Activated T-helper 1 cell treated with anti-CD3 and anti-CD28 coated beads, Interleukin-12 subunit alpha, Interleukin-12 subunit beta, Interleukin-2, Interleukin-4 antibody, amounts not matched to agents 30 ng/mL and 10 ng/mL and 1 ng/mL, durations not matched to agents 14 hours and 24 hours and 36 hours (primary cell): ENCODE measurements at regions of chr1 and their contacts with region 1.

Region 1: GRCh38 chr1:39691262-39692151 is at the start of gene HPCAL4:
- DNase-seq: peak; percentile 88
- H3K4me3 Mint-ChIP-seq: peak within 1 kb of the TSS; percentile 83
- H3K27ac Mint-ChIP-seq: no peak within 1 kb of the TSS
- H3K4me1 Mint-ChIP-seq: peaks cover 44% of the 10 kb centered on the region
- H3K27me3 Mint-ChIP-seq: peaks cover 33% of the 10 kb centered on the region
- total RNA-seq, gene HPCAL4: 0.69 and 0.75 TPM in 2 replicates

Region 2: GRCh38 chr1:38166473-38166872 is 1525.0 kb before region 1 on chr1:
- intact Hi-C with region 1: no loop called
- DNase-seq: no peak
- H3K4me3 Mint-ChIP-seq: no peak overlapping the region
- H3K27ac Mint-ChIP-seq: no peak overlapping the region
- H3K4me1 Mint-ChIP-seq: no peaks in the 10 kb centered on the region
- H3K27me3 Mint-ChIP-seq: peaks cover 3% of the 10 kb centered on the region

Region 3: DNA sequence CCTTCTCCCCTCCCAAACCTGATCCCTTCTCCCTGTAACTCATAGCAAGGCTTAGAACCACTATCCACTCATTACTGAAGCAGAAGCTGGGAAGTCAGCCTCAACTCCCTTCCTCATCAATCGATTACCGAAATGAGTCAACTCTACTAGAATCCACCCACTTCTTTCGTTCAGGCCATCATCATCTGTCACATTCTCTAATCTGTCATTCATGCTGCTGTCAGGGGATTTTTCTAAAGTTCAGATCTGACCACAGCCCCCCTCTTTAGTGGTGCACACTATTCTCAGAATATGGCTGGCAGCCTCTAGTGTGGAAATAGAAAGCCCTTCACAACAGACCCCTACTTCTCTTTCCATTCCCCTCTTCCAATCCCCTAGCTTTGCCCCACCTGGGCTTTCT is 24.7 kb before region 1 on chr1:
- intact Hi-C with region 1: loop called (anchors 1 kb)
- DNase-seq: peak; percentile 46
- H3K4me3 Mint-ChIP-seq: peak overlapping the region; percentile 23
- H3K27ac Mint-ChIP-seq: peak overlapping the region; percentile 62
- H3K4me1 Mint-ChIP-seq: peaks cover 38% of the 10 kb centered on the region
- H3K27me3 Mint-ChIP-seq: peaks cover 9% of the 10 kb centered on the region

Region 4: DNA sequence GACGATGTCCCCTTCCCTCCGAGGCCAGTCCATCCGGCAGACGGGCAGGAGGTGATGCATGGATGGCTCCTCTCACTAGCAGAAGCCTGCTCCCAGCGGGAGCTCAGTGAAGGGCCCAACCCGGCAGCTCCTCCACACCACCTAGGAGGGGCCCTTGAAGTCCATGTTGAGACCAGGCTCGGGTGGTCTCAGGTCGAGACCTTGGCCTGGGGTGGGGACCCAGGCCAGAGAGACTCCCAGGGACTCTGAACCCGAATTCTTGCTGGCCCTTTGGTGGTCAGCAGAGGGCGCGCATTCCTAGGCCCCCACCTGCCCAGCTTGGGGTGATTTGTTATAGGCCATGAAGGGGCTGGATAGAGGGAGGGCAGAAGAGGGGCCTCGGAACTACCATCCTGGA is 19.0 kb before region 1 on chr1:
- intact Hi-C with region 1: loop called (anchors 1 kb)
- DNase-seq: no peak
- H3K4me3 Mint-ChIP-seq: peak overlapping the region; percentile 76
- H3K27ac Mint-ChIP-seq: no peak overlapping the region
- H3K4me1 Mint-ChIP-seq: peaks cover 21% of the 10 kb centered on the region
- H3K27me3 Mint-ChIP-seq: peaks cover 14% of the 10 kb centered on the region

Region 5: GRCh38 chr1:39738622-39739366 is 47.3 kb after region 1 on chr1 and contains the start of gene PPIE:
- intact Hi-C with region 1: loop called (anchors 5 kb)
- DNase-seq: peak; percentile 83
- H3K4me3 Mint-ChIP-seq: peak within 1 kb of the TSS; percentile 96
- H3K27ac Mint-ChIP-seq: peak within 1 kb of the TSS; percentile 93
- H3K4me1 Mint-ChIP-seq: peaks cover 67% of the 10 kb centered on the region
- H3K27me3 Mint-ChIP-seq: no peaks in the 10 kb centered on the region
- total RNA-seq, gene PPIE: 68.1 and 75.0 TPM in 2 replicates

Region 6: DNA sequence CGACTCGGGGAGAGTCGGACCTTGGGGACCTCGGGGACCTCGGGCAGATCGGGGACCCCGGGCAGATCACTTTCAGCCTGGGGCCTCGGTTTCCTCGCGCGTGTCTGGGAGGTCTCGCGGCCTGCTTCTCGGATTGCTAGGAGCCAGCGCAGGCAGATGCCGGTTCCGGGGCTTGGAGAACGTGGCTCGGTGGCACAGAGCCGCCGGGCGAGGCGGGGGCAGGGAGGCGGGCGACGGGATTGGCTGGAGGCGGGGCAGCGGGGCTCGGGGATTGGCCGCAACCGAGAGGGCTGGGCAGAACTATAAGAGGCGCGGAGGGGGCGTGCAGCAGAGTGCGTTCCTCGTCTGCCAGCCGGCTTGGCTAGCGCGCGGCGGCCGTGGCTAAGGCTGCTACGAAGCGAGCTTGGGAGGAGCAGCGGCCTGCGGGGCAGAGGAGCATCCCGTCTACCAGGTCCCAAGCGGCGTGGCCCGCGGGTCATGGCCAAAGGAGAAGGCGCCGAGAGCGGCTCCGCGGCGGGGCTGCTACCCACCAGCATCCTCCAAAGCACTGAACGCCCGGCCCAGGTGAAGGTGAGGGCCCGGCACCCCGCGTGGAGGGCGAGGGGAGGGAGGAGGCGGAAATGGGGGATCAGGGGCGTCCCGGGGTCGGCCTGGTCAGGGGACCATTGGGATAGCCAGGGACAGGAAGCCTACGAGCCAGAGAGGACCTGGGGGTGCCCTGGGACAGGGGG is 263.5 kb after region 1 on chr1 and contains the start of gene MFSD2A:
- intact Hi-C with region 1: loop called (anchors 5 kb)
- DNase-seq: peak; percentile 80
- H3K4me3 Mint-ChIP-seq: peak within 1 kb of the TSS; percentile 98
- H3K27ac Mint-ChIP-seq: peak within 1 kb of the TSS; percentile 94
- H3K4me1 Mint-ChIP-seq: peaks cover 49% of the 10 kb centered on the region
- H3K27me3 Mint-ChIP-seq: no peaks in the 10 kb centered on the region
- total RNA-seq, gene MFSD2A: 55.3 and 56.2 TPM in 2 replicates